ENCODE measurements at regions of chr3 and their contacts with region 1.

Region 1: GRCh38 chr3:49093853-49094767 is at the start of gene QRICH1:
- DNase-seq: peak; percentile 90 to 98 (median 95)
- ATAC-seq: peak; percentile 77
- H3K4me3 ChIP-seq: peak within 1 kb of the TSS; percentile 76 to 95
- H3K4me3 Mint-ChIP-seq: peak within 1 kb of the TSS; percentile 91
- H3K27ac ChIP-seq: peak within 1 kb of the TSS; percentile 81 to 90
- H3K27ac Mint-ChIP-seq: peak within 1 kb of the TSS; percentile 99
- H3K4me1 ChIP-seq: peaks cover 33% of the 10 kb centered on the region
- H3K4me1 Mint-ChIP-seq: peaks cover 37% of the 10 kb centered on the region
- H3K27me3 ChIP-seq: no peaks in the 10 kb centered on the region
- H3K27me3 Mint-ChIP-seq: no peaks in the 10 kb centered on the region
- CTCF ChIP-seq: peak; percentile 67
- total RNA-seq, gene QRICH1: 232 to 246 TPM

Region 2: DNA sequence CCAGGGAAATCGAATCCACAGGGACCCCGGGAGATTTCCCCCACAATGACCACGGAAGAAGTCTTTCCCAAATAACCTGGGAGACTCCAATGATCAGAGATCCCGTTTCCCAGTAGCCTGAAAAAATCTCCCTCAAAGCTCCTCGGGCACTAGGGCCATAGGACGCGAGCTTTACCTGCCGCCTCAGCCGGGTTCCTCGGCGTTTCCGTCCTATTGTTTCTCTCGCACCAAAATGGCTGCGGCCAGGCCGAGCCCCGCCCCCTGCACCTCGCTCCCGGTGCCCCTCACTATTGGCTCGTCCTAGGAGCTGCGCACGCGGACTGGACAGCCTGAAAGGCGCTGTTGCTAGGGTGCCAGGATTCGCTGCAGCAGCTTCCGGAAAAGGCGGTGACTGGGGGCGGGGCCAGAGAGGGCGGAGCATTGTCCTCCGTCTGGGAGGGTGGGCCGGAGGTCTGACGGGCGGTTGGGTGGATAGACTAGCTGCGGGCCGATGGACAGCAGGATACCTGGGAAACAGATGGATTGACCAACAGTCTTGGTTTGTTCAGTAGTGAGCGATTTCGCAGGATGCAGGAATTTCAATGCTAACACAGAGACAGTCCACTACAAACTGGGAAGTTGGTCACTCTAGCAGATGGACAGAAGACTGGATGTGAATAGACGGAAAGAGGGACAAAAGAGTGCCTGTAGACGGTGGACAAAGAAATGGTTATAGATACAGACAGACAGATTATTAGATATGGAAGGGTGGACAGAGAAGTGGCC is 376.9 kb before region 1 on chr3 and contains the start of gene IP6K2:
- CTCF ChIA-PET with region 1: no interaction called
- POLR2A ChIA-PET with region 1: interaction called, 6 read pairs
- intact Hi-C with region 1: loop called in 1 of 2 experiments (anchors 1 kb)
- DNase-seq: peak; percentile 97 to 99 (median 99)
- ATAC-seq: peak; percentile 99
- H3K4me3 ChIP-seq: peak within 1 kb of the TSS; percentile 90 to 100
- H3K4me3 Mint-ChIP-seq: peak within 1 kb of the TSS; percentile 99
- H3K27ac ChIP-seq: peak within 1 kb of the TSS; percentile 87 to 97
- H3K27ac Mint-ChIP-seq: peak within 1 kb of the TSS; percentile 97
- H3K4me1 ChIP-seq: peaks cover 27% of the 10 kb centered on the region
- H3K4me1 Mint-ChIP-seq: peaks cover 48% of the 10 kb centered on the region
- H3K27me3 ChIP-seq: no peaks in the 10 kb centered on the region
- H3K27me3 Mint-ChIP-seq: no peaks in the 10 kb centered on the region
- CTCF ChIP-seq: no peak
- total RNA-seq, gene IP6K2: 118 to 123 TPM

Region 3: GRCh38 chr3:49007068-49007770 is 86.9 kb before region 1 on chr3 and contains the start of gene WDR6:
- CTCF ChIA-PET with region 1: interaction called, 5 read pairs
- POLR2A ChIA-PET with region 1: interaction called, 23 read pairs
- intact Hi-C with region 1: loop called (anchors 1 kb)
- DNase-seq: peak; percentile 94 to 99 (median 96)
- ATAC-seq: peak; percentile 87
- H3K4me3 ChIP-seq: peak within 1 kb of the TSS; percentile 87 to 92
- H3K4me3 Mint-ChIP-seq: peak within 1 kb of the TSS; percentile 100
- H3K27ac ChIP-seq: peak within 1 kb of the TSS; percentile 81 to 92
- H3K27ac Mint-ChIP-seq: peak within 1 kb of the TSS; percentile 99
- H3K4me1 ChIP-seq: peaks cover 15% of the 10 kb centered on the region
- H3K4me1 Mint-ChIP-seq: peaks cover 30% of the 10 kb centered on the region
- H3K27me3 ChIP-seq: no peaks in the 10 kb centered on the region
- H3K27me3 Mint-ChIP-seq: no peaks in the 10 kb centered on the region
- CTCF ChIP-seq: peak; percentile 34
- total RNA-seq, gene WDR6: 112 to 130 TPM

Region 4: DNA sequence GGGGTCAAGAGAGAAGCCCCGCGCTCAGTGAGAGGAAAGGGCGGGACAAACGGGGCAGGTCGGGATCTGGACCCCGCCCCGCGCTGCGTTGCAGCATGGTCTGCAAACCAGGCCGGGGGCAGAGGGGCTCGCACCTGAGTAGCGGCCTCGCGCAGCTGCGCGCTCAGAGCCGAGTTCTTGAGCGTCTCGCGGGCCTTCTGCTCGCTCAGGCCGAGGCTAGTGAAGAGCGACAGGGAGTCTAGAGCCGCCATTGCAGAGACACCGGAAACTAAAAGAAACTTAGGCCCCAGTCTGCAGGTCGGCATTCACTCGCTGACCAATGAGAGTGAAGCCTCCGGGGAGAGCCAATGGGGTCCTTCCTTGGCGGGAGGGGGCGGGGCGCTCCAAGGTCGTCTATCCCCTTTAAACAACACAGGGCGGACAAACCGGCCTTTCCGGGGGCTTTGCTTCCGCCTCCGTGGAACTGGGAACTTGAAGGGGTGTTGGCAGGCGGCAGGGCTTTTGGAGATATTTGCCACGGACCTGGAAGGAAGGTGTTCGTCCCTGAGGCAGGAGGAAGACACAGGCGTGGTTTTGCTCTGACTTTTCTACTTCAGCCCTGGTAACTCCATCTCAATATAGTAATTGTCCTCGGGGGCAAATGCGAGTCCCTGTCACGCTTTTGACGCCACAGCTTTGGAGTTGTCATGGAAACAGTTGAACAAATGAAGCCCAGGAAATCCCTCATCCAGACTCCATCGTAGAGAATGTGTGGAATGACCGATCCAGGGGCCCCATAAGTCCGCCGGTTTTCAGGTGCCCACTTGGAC is 10.6 kb after region 1 on chr3 and contains the start of gene QARS1:
- CTCF ChIA-PET with region 1: interaction called, 9 read pairs
- POLR2A ChIA-PET with region 1: interaction called, 51 read pairs
- intact Hi-C with region 1: loop called (anchors 1 kb)
- DNase-seq: peak; percentile 69 to 93 (median 90)
- ATAC-seq: peak; percentile 99
- H3K4me3 ChIP-seq: peak within 1 kb of the TSS; percentile 85 to 86
- H3K4me3 Mint-ChIP-seq: peak within 1 kb of the TSS; percentile 98
- H3K27ac ChIP-seq: peak within 1 kb of the TSS; percentile 70 to 73
- H3K27ac Mint-ChIP-seq: peak within 1 kb of the TSS; percentile 97
- H3K4me1 ChIP-seq: peaks cover 15% of the 10 kb centered on the region
- H3K4me1 Mint-ChIP-seq: peaks cover 29% of the 10 kb centered on the region
- H3K27me3 ChIP-seq: no peaks in the 10 kb centered on the region
- H3K27me3 Mint-ChIP-seq: no peaks in the 10 kb centered on the region
- CTCF ChIP-seq: no peak
- total RNA-seq, gene QARS1: 307 to 343 TPM

Region 5: GRCh38 chr3:49165771-49166751 is 72.0 kb after region 1 on chr3 and contains the start of gene CCDC71:
- CTCF ChIA-PET with region 1: no interaction called
- POLR2A ChIA-PET with region 1: interaction called, 8 read pairs
- intact Hi-C with region 1: loop called (anchors 1 to 2 kb)
- DNase-seq: peak; percentile 52 to 89 (median 75)
- ATAC-seq: peak; percentile 77
- H3K4me3 ChIP-seq: peak within 1 kb of the TSS; percentile 87 to 92
- H3K4me3 Mint-ChIP-seq: peak within 1 kb of the TSS; percentile 90
- H3K27ac ChIP-seq: peak within 1 kb of the TSS; percentile 60 to 81
- H3K27ac Mint-ChIP-seq: peak within 1 kb of the TSS; percentile 93
- H3K4me1 ChIP-seq: peaks cover 28% of the 10 kb centered on the region
- H3K4me1 Mint-ChIP-seq: peaks cover 44% of the 10 kb centered on the region
- H3K27me3 ChIP-seq: no peaks in the 10 kb centered on the region
- H3K27me3 Mint-ChIP-seq: no peaks in the 10 kb centered on the region
- CTCF ChIP-seq: no peak
- total RNA-seq, gene CCDC71: 15.6 to 15.9 TPM

Region 6: GRCh38 chr3:49411968-49412631 is 318.0 kb after region 1 on chr3 and contains the starts of genes RHOA and TCTA:
- CTCF ChIA-PET with region 1: no interaction called
- POLR2A ChIA-PET with region 1: interaction called, 4 read pairs
- intact Hi-C with region 1: loop called (anchors 1 kb)
- DNase-seq: peak; percentile 97 to 100 (median 99)
- ATAC-seq: peak; percentile 85
- H3K4me3 ChIP-seq: peak within 1 kb of the TSS; percentile 81 to 91
- H3K4me3 Mint-ChIP-seq: peak within 1 kb of the TSS; percentile 94
- H3K27ac ChIP-seq: peak within 1 kb of the TSS; percentile 89 to 94
- H3K27ac Mint-ChIP-seq: peak within 1 kb of the TSS; percentile 98
- H3K4me1 ChIP-seq: peaks cover 70% of the 10 kb centered on the region
- H3K4me1 Mint-ChIP-seq: peaks cover 70% of the 10 kb centered on the region
- H3K27me3 ChIP-seq: no peaks in the 10 kb centered on the region
- H3K27me3 Mint-ChIP-seq: no peaks in the 10 kb centered on the region
- CTCF ChIP-seq: no peak
- total RNA-seq, gene RHOA: 271 to 294 TPM
- total RNA-seq, gene TCTA: 19.8 to 21.1 TPM